ENCODE measurements at regions of chr1 and their contacts with region 1.

Region 1: DNA sequence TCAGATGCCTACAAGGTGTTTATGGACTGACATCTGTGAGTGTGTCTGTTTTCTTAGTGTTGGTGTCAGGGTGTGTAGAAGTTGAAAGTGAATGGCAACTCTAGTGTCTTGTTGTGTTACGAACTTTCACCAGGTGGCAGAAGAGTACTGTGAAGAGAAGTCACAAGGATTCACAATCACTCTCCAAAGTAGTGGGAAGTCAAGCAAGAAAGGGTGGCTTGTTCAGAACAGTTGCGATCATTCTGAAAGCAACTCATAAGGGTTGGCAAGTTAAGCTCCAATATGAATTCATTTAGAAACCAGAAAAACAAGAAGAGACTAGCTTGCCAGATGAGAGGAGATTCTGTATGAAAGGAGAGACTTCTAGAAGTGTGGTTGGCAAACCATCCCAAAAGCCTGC is 86.1 kb downstream of the FASLG start:
- DNase-seq: peak; percentile 64
- H3K4me3 Mint-ChIP-seq: no peak overlapping the region
- H3K27ac Mint-ChIP-seq: no peak overlapping the region
- H3K4me1 Mint-ChIP-seq: peaks cover 38% of the 10 kb centered on the region
- H3K27me3 Mint-ChIP-seq: no peaks in the 10 kb centered on the region

Region 2: DNA sequence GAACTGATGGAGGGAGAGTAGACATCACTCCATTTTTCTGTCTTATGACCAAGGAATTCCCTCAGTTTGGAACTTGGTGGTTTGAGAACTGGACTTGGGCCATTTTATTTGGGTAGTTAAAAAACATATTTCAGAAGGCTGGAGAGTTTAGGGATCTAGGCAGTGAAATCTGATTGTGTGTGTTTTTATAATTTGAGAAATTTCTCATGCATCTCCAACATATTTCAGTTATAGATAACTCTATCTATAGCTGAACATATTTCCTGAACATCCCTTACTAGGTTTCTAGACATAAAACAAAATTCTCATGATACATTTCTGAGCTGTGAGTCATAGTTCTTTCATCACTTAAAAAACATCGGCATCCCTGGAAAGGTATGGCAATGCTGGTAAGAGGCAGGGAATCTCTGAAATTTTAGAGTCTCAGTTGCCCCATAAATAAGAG is 16.6 kb after region 1 on chr1:
- CTCF ChIA-PET with region 1: interaction called, 41 read pairs
- intact Hi-C with region 1: no loop called
- DNase-seq: no peak
- H3K4me3 Mint-ChIP-seq: no peak overlapping the region
- H3K27ac Mint-ChIP-seq: no peak overlapping the region
- H3K4me1 Mint-ChIP-seq: peaks cover 57% of the 10 kb centered on the region
- H3K27me3 Mint-ChIP-seq: no peaks in the 10 kb centered on the region

Region 3: GRCh38 chr1:172826096-172826743 is 81.2 kb after region 1 on chr1:
- CTCF ChIA-PET with region 1: interaction called, 22 read pairs
- intact Hi-C with region 1: loop called (anchors 2 kb)
- DNase-seq: no peak
- H3K4me3 Mint-ChIP-seq: no peak overlapping the region
- H3K27ac Mint-ChIP-seq: no peak overlapping the region
- H3K4me1 Mint-ChIP-seq: no peaks in the 10 kb centered on the region
- H3K27me3 Mint-ChIP-seq: peaks cover 6% of the 10 kb centered on the region

Region 4: GRCh38 chr1:172895050-172895460 is 150.0 kb after region 1 on chr1:
- CTCF ChIA-PET with region 1: interaction called, 18 read pairs
- intact Hi-C with region 1: loop called (anchors 1 kb)
- DNase-seq: peak; percentile 40
- H3K4me3 Mint-ChIP-seq: no peak overlapping the region
- H3K27ac Mint-ChIP-seq: peak overlapping the region; percentile 9
- H3K4me1 Mint-ChIP-seq: peaks cover 42% of the 10 kb centered on the region
- H3K27me3 Mint-ChIP-seq: peaks cover 4% of the 10 kb centered on the region

Region 5: DNA sequence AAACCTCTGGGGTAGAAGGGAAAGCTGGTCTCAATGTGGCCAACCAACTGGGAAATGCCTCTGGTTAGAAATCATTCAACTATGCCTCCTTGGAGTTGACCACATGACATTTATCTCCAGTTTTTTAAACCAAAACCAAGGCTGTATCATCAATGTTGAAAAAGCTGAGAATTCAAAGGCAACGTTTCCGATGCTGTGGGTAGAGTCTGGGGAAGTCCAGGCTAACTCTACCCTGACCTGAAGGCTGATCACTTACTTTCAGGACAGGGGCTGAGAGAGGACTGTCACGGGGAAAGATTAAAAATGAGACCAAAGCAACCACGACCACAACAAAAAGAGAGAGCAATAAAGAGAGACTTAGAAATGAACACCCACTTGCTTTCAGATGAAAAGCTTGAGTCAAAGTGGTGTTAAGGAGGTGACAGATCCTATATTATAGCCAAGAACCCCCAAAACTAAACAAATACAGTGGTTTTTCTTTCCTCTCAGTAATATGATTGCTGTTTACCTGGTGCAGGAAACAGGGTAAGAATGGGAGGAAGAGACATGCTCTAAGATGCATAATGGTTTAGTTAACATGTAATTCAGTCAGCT is 552.9 kb after region 1 on chr1:
- CTCF ChIA-PET with region 1: no interaction called
- intact Hi-C with region 1: loop called (anchors 2 kb)
- DNase-seq: peak; percentile 76
- H3K4me3 Mint-ChIP-seq: no peak overlapping the region
- H3K27ac Mint-ChIP-seq: peak overlapping the region; percentile 2
- H3K4me1 Mint-ChIP-seq: peaks cover 41% of the 10 kb centered on the region
- H3K27me3 Mint-ChIP-seq: no peaks in the 10 kb centered on the region

Region 6: DNA sequence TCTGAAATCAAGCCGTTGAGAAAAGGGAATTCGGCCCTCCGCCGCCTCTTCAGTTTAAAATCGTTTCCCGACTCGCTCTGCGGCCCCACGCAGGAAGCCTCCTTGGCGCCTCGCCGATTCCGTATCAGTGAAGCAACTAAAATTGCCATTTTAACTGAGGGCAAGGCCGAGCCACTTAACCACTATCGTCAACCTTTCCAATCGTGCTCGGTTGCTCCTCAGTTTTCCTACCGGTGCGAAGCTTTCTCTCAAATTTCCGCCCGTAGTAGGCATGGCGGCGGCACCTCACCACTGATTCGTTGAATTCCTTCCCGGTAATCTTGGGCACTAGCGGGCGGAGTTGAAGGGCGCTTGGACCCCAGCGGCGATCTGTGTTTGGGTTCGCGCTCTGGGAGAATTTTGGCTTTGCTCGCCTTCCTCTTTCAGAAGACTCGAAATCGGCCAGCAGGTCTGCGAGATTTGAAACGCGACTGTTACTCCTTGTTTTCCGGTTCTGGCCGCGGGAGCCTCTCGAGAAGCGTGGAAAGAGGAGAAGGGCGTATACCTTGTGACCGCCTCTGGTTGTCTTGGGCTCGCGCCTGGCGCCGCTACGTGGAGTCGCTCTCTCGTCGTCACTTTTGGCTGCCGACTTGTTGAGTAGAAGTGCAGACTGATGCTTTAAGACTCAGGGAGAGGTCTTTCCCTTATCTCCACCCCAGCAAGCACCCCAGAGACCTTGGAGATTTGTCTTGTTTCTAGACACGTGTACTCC is 1079.5 kb after region 1 on chr1 and contains the starts of genes CENPL and DARS2:
- CTCF ChIA-PET with region 1: interaction called, 4 read pairs
- intact Hi-C with region 1: loop called (anchors 1 kb)
- DNase-seq: peak; percentile 95
- H3K4me3 Mint-ChIP-seq: peak within 1 kb of the TSS; percentile 93
- H3K27ac Mint-ChIP-seq: peak within 1 kb of the TSS; percentile 98
- H3K4me1 Mint-ChIP-seq: peaks cover 46% of the 10 kb centered on the region
- H3K27me3 Mint-ChIP-seq: no peaks in the 10 kb centered on the region
- total RNA-seq, gene CENPL: 31.1 to 31.9 TPM
- total RNA-seq, gene DARS2: 42.7 to 44.1 TPM

Region 7: DNA sequence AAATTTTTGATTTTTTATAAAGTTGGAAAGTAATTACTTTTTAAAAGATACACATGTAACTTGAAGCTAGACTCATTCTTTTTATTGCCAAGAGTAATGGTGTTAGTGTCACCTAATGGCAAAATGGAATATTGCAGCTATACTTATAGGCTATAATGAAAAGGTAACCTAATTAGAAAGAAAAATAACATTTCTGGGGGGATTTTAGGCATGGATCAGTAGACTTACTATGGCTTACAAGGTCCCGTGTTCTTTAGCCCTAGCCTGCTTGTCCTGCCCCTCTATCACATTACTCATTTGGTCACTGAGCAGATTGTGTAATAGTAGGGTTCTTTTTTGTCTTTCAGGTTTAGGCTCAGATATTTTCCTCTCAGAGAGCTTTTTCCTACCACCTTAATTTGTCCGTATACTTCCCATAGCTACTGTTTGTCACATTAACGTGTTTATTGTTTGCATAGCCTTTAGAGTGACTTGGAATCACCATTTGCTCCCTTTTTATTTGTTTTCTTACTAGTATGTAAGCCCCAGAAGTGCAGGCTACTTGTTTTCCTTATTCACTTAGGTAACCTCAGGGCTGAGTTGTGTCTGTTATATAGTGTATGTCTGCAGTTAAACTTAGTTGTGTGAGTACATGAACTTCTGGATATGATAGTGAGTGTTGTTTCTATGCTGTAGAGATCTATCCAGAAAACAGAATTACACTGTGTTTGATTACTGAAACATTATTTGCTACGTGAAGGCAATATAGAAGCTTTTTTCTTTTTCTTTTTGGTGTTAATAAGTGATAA is 1473.0 kb after region 1 on chr1:
- CTCF ChIA-PET with region 1: no interaction called
- intact Hi-C with region 1: loop called (anchors 10 kb)
- DNase-seq: no peak
- H3K4me3 Mint-ChIP-seq: no peak overlapping the region
- H3K27ac Mint-ChIP-seq: no peak overlapping the region
- H3K4me1 Mint-ChIP-seq: peaks cover 6% of the 10 kb centered on the region
- H3K27me3 Mint-ChIP-seq: no peaks in the 10 kb centered on the region